ENCODE measurements at regions of chr16 and their contacts with region 1.

Region 1: GRCh38 chr16:9258423-9259051 is 167.1 kb downstream of the HAPSTR1 start:
- DNase-seq: peak; percentile 43
- H3K4me3 Mint-ChIP-seq: no peak overlapping the region
- H3K27ac Mint-ChIP-seq: no peak overlapping the region
- H3K4me1 Mint-ChIP-seq: no peaks in the 10 kb centered on the region
- H3K27me3 Mint-ChIP-seq: no peaks in the 10 kb centered on the region

Region 2: GRCh38 chr16:8644211-8645140 is 614.1 kb before region 1 on chr16:
- CTCF ChIA-PET with region 1: no interaction called
- intact Hi-C with region 1: no loop called
- DNase-seq: peak; percentile 11
- H3K4me3 Mint-ChIP-seq: no peak overlapping the region
- H3K27ac Mint-ChIP-seq: no peak overlapping the region
- H3K4me1 Mint-ChIP-seq: peaks cover 11% of the 10 kb centered on the region
- H3K27me3 Mint-ChIP-seq: no peaks in the 10 kb centered on the region

Region 3: GRCh38 chr16:9192746-9193145 is 65.8 kb before region 1 on chr16:
- CTCF ChIA-PET with region 1: no interaction called
- intact Hi-C with region 1: no loop called
- DNase-seq: no peak
- H3K4me3 Mint-ChIP-seq: no peak overlapping the region
- H3K27ac Mint-ChIP-seq: no peak overlapping the region
- H3K4me1 Mint-ChIP-seq: no peaks in the 10 kb centered on the region
- H3K27me3 Mint-ChIP-seq: peaks cover 3% of the 10 kb centered on the region

Region 4: DNA sequence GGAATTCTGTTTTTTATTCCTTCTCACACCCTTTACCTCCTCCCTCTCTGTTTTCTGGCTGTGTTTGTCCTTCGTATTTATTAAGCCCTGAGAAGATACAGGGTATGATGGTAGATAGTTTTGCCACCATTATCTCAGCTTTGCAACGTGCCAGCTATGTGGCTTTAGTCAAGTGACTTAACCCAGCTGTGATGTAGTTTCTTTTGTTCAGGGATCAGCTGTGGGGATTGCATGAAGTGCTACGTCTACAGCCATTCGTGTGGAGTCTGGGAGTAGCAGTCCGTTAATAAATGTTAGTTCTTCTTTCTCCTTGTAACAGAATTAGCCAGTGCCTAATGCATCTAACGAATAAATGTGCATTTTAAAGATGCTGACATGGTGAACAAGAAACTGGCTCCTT is 38.7 kb before region 1 on chr16:
- CTCF ChIA-PET with region 1: no interaction called
- intact Hi-C with region 1: no loop called
- DNase-seq: no peak
- H3K4me3 Mint-ChIP-seq: no peak overlapping the region
- H3K27ac Mint-ChIP-seq: no peak overlapping the region
- H3K4me1 Mint-ChIP-seq: no peaks in the 10 kb centered on the region
- H3K27me3 Mint-ChIP-seq: no peaks in the 10 kb centered on the region

Region 5: DNA sequence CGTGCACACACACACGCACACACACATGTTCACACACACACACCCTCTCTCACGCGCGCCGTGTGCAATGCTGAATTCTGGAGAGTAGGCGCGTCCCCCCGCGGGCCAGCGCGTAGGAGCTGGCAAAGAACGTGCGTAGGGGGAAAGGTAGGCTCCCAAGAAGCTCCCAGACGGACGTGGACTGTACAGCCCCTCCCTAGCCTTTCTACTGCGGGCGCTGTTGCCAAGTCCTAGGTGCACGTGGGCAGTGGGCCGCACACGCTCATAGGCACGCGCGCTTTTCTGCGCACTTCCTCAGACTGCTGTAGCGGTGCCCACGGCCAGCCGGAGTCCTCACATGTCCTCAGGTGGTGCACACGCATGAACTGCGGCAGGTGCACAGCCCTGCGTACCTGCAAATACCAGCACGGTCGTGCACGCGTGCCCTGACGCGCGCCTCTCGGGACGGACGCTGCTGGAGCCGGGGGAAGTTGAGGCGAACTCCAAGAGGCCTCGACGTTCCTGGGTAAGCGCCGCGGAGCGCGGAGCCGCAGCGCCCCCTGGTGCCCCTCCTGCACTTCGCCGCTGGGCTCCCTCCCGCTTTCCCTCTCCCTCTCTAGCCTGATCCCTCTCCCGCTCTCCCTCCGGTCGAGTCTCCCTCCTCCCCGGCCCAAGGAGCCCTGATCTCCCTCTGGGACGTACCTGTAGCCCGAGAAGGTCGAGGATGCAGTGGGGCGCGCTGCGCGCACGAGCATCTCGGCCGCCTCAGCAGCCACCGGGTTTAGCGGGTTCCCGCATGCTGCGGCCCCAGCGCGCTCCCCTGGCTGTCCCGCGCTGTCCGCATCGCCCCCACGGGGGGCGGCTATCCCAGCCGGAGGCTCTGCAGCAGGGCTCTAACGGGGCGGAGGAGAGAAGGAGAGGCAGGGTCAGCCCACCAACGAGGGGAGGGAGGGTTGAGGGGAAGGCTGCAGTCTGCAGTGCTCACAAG is 922.9 kb after region 1 on chr16:
- CTCF ChIA-PET with region 1: no interaction called
- intact Hi-C with region 1: loop called (anchors 1 kb)
- DNase-seq: peak; percentile 50
- H3K4me3 Mint-ChIP-seq: no peak overlapping the region
- H3K27ac Mint-ChIP-seq: no peak overlapping the region
- H3K4me1 Mint-ChIP-seq: peaks cover 16% of the 10 kb centered on the region
- H3K27me3 Mint-ChIP-seq: peaks cover 43% of the 10 kb centered on the region